Activated CD4-positive, alpha-beta memory T cell treated with anti-CD3 and anti-CD28 coated beads, Interleukin-2, amount 10 ng/mL, durations not matched to agents 7 days and 5 days (primary cell): ENCODE measurements at regions of chr14 and their contacts with region 1.

Region 1: DNA sequence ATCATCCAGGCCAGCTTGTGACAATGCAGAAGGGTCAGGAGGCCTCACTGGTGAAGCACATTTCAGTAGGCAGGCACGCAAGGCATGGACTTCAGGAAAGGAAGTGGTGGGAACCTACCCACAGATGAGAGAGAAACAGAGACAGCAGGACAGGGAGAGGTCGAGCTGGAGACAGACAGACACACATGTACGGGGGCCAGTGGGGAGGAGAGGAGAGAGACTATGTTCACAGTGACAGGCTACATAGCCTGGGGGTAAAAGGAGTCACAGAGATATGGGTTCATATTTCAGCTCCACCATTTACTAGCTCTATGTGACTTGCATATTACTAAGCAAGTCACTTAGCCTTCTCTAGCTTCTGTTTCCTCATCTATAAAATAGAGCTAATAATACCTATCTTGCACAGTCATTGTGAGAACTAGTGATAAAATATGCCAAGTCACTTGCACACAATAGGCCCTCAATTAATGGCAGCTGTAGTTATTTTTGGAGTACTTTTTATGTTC is 91.1 kb upstream of the FUT8 start:
- DNase-seq: peak; percentile 40
- H3K4me3 Mint-ChIP-seq: no peak overlapping the region
- H3K27ac Mint-ChIP-seq: peak overlapping the region; percentile 34
- H3K4me1 Mint-ChIP-seq: peaks cover 47% of the 10 kb centered on the region
- H3K27me3 Mint-ChIP-seq: no peaks in the 10 kb centered on the region

Region 2: GRCh38 chr14:65336191-65336591 is 14.8 kb after region 1 on chr14:
- CTCF ChIA-PET with region 1: interaction called, 3 read pairs
- POLR2A ChIA-PET with region 1: interaction called, 25 read pairs
- DNase-seq: peak; percentile 70
- H3K4me3 Mint-ChIP-seq: peak overlapping the region; percentile 70
- H3K27ac Mint-ChIP-seq: peak overlapping the region; percentile 91
- H3K4me1 Mint-ChIP-seq: peaks cover 60% of the 10 kb centered on the region
- H3K27me3 Mint-ChIP-seq: no peaks in the 10 kb centered on the region